ENCODE measurements at regions of chr4 and their contacts with region 1.

Region 1: DNA sequence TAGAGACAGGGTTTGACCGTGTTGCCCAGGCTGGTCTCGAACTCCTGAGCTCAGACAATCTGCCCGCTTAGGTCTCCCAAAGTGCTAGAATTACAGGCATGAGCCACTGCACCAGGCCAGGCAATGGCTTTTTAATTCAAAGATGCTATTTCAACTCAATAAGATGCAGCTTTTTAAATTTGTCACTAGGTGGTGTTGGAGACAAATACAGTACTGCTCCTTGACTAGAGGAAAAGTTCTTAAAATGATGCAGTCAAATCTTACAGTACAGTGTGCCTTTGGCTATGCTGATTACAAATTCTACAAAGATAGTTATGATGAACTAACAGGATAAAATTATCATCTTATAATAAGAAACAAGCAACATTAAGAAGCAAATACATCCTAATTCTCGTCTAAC is 441.1 kb downstream of the KCNIP4 start:
- DNase-seq: no peak
- CTCF ChIP-seq: peak; percentile 50

Region 2: GRCh38 chr4:20926529-20926928 is 580.9 kb before region 1 on chr4:
- in situ Hi-C with region 1: no loop called
- DNase-seq: no peak
- CTCF ChIP-seq: no peak

Region 3: DNA sequence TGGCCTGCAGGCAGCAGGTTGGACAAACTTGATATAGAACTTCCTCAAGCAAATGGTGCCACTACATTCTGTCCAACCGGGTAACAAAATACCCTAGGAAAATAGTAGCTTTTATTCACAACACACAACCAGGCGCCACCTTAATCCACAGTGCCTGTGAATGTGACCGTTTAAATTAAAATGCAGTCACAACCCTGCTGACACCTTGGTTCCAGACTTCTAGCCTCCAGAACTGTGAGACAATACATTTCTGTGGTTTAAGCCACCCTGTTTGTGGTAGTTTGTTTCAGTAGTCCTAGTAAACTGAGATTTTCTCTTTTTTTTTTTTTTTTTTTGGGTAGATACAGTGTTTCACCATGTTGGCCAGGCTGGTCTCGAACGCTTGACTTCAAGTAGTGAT is 231.4 kb before region 1 on chr4:
- in situ Hi-C with region 1: no loop called
- DNase-seq: no peak
- CTCF ChIP-seq: no peak

Region 4: DNA sequence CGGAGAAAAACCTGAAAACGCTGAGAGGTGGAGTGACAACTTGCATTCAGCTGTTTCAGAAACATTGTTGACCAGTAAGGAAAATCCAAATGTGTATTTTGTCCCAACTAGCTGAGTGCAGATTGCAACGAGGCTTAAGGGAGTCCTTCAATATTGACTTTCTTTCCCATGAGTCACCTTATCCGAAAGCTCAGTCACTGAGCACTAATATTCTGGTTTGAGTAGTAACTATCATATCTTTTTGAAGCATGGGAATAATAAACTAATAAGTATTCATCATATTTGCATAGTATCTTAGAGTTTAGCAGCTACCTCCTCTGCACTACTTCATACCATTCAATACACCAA is 202.9 kb before region 1 on chr4:
- in situ Hi-C with region 1: no loop called
- DNase-seq: no peak
- CTCF ChIP-seq: no peak

Region 5: GRCh38 chr4:21765810-21766407 is 258.5 kb after region 1 on chr4:
- in situ Hi-C with region 1: loop called (anchors 10 kb)
- DNase-seq: peak; percentile 24
- CTCF ChIP-seq: peak; percentile 88